ENCODE measurements at regions of chr11 and their contacts with region 1.

Region 1: DNA sequence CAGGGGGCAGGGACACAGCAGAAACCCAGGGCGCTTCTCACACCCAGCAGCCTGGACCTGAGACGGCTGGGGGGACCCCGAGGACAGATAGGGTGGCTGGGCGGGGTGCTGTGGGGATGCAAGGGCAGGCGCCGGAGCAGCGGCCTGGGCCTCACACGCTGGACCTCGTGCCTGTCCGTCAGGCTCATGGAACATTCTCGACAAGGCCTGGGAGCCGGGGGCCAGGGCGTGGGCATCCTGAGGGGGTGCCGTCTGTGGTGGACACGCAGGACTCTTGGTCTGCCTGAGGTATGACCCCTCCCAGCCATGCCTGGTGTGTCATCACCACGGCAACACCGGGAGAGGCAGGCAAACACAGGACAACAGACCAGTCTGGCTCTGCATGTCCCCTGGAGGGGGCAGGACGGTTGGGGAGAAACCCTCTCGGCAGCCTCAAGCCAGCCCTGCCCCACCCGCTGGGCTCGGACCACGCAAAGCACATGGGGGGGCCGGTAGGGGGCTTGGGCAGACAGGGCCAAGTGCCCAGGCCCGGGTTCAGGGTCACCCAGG is 21.4 kb downstream of the MRPL23 start:
- DNase-seq: no peak
- H3K4me3 ChIP-seq: no peak overlapping the region
- H3K27me3 ChIP-seq: no peaks in the 10 kb centered on the region
- CTCF ChIP-seq: no peak

Region 2: DNA sequence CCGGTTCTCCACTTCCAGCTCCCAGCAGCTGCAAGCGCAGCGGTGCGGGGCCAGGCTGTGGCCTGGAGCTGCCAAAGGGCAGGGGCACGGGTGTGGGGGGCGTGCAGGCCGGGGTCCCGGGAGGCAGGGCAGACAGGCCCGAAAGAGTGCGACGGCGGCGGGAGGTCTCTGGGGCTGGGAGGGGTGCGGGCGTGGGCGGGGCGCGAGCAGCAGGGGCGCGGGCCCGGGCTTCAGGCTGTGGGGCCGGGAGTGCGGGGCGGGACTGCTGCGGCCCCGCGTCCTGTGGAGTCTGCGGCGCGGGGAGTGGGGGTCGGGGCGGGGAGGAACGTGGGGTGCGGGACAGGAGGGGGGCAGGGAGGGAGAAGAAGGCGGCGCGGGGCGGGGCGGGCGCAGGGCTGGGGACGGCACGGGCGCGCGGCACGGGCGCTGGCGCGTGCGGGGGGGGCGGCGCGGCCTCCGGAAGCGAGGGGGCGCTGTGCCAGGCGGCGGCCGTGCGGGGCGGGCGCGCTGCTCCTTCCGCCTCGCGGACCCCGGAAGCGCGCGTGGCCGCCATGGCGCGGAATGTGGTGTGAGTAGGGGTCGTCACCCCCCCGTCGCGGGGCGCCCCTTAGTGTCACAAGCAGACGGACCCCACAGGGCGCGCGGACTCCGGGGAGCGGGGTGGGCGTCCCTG is 21.6 kb before region 1 on chr11 and contains the start of gene MRPL23:
- CTCF ChIA-PET with region 1: interaction called, 20 read pairs
- POLR2A ChIA-PET with region 1: interaction called, 3 read pairs
- DNase-seq: no peak
- H3K4me3 ChIP-seq: no peak within 1 kb of the TSS
- H3K27me3 ChIP-seq: no peaks in the 10 kb centered on the region
- CTCF ChIP-seq: no peak
- polyA plus RNA-seq, gene MRPL23: 39.8 and 43.5 TPM in 2 replicates

Region 3: DNA sequence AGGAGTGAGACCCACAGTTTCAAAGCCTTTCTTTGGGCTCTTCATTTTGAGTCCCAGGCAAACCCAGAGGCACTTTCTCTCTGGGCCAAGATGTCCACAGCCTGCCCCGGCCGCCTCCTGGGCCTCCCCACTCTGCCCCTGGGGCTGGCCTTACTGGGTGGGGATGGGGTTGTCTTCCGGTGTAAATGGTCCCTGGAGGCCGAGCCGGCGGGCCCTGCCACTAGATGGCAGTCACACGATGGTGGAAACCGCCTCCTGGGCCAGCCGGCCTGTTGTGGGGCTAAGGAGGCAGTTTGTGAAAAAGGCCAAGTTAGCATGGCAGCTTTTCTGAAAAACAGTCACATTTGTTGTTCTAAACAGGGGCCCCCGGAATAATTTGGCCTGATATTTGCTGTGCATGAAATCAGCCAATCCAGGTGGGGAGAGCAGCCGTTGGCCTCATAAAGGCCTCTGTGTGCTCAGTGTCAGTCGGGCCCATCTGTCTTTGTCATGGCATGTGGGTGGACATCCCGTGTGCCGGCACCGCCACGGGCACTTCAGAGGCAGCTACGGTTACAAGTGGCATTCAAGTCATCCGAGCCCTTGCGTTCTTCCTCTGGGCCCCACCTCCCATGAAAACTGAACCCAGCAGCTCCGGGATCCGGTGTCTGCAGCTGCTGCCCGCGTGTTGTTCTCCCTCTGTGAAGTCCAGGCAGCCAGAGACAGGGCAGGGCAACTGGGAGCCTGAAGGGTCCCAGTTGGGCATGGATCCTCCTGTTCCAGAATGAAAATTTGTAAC is 14.8 kb before region 1 on chr11:
- CTCF ChIA-PET with region 1: interaction called, 20 read pairs
- POLR2A ChIA-PET with region 1: no interaction called
- DNase-seq: no peak
- H3K4me3 ChIP-seq: no peak overlapping the region
- H3K27me3 ChIP-seq: no peaks in the 10 kb centered on the region
- CTCF ChIP-seq: peak; percentile 17; the same call in 1 of the 2 replicates